ENCODE measurements at regions of chr3 and their contacts with region 1.

Region 1: GRCh38 chr3:195001961-195002861 is 268.7 kb downstream of the XXYLT1 start:
- DNase-seq: peak; percentile 64
- ATAC-seq: peak; percentile 85
- H3K4me3 ChIP-seq: no peak overlapping the region
- H3K4me3 Mint-ChIP-seq: no peak overlapping the region
- H3K27ac ChIP-seq: no peak overlapping the region
- H3K27ac Mint-ChIP-seq: no peak overlapping the region
- H3K4me1 ChIP-seq: peaks cover 15 to 30% of the 10 kb centered on the region in 2 donors
- H3K4me1 Mint-ChIP-seq: peaks cover 31% of the 10 kb centered on the region
- H3K27me3 ChIP-seq: no peaks in the 10 kb centered on the region
- H3K27me3 Mint-ChIP-seq: no peaks in the 10 kb centered on the region
- CTCF ChIP-seq: peak; percentile 66

Region 2: DNA sequence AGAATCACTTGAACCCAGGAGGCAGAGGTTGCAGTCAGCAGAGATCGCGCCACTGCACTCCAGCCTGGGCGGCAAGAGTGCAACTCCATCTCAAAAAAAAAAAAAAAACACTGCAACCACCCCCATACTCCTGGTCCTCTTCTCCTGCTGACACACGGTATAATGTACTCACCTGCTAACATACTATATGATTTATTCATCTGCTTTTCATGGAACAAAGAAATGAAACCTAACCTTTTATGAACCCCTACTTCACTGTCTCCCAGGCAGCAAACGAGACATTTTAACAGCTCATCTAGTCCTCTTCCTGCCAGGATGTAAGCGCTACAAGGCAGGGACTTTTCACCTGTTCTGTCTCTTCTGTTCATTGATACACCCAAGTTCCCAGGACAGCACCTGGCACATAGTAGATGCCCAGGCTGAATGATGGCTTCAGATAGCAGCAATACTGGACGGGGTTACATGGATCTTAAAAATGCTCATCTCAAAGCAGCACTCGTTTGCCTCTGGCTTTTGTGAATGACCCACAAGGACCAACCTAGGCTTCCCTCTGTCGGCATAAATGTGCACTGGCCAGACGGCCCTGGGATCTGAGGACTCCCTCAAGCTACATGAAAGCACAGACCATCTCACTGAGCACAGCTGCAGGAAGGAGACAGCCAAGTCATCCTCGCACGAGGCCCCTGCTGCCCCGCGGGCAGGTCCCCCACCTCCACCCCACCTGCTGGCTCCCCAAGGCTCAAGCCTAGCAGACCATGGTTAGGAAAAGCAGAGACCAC is 248.5 kb after region 1 on chr3:
- CTCF ChIA-PET with region 1: interaction called, 14 read pairs
- POLR2A ChIA-PET with region 1: no interaction called
- intact Hi-C with region 1: no loop called
- DNase-seq: peak; percentile 31
- ATAC-seq: peak; percentile 73
- H3K4me3 ChIP-seq: no peak overlapping the region
- H3K4me3 Mint-ChIP-seq: no peak overlapping the region
- H3K27ac ChIP-seq: no peak overlapping the region
- H3K27ac Mint-ChIP-seq: peak overlapping the region; percentile 0
- H3K4me1 ChIP-seq: peaks cover 8 to 11% of the 10 kb centered on the region in 2 donors
- H3K4me1 Mint-ChIP-seq: peaks cover 19% of the 10 kb centered on the region
- H3K27me3 ChIP-seq: no peaks in the 10 kb centered on the region
- H3K27me3 Mint-ChIP-seq: no peaks in the 10 kb centered on the region
- CTCF ChIP-seq: no peak

Region 3: GRCh38 chr3:195259475-195260279 is 257.5 kb after region 1 on chr3:
- CTCF ChIA-PET with region 1: interaction called, 12 read pairs
- POLR2A ChIA-PET with region 1: interaction called, 3 read pairs
- intact Hi-C with region 1: loop called (anchors 1 kb)
- DNase-seq: peak; percentile 95
- ATAC-seq: peak; percentile 90
- H3K4me3 ChIP-seq: peak overlapping the region in 4 of 5 experiments; percentile 63 to 89 (median 72)
- H3K4me3 Mint-ChIP-seq: peak overlapping the region; percentile 74
- H3K27ac ChIP-seq: peak overlapping the region; percentile 78 to 87
- H3K27ac Mint-ChIP-seq: peak overlapping the region; percentile 92
- H3K4me1 ChIP-seq: peaks cover 16 to 23% of the 10 kb centered on the region in 2 donors
- H3K4me1 Mint-ChIP-seq: peaks cover 19% of the 10 kb centered on the region
- H3K27me3 ChIP-seq: no peaks in the 10 kb centered on the region
- H3K27me3 Mint-ChIP-seq: no peaks in the 10 kb centered on the region
- CTCF ChIP-seq: peak; percentile 73

Region 4: DNA sequence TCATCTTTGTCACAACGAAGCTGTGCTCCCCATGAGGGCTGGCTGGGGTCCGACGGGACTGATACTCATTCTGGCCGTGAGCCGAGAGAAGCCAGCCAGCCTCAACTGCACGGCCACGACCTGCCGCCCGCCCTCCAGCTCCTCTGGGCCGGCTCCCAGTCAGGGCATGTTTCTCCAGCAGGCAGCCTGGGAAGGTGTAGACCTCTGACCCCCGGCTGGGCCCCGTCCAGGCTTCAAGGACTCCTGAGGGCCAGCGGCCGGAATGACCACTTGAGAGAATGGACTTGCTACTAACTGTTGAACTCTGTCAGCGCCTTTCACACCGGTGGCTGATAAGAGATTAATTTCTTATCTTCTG is 827.7 kb after region 1 on chr3:
- CTCF ChIA-PET with region 1: no interaction called
- POLR2A ChIA-PET with region 1: no interaction called
- intact Hi-C with region 1: no loop called
- DNase-seq: no peak
- ATAC-seq: no peak
- H3K4me3 ChIP-seq: no peak overlapping the region
- H3K4me3 Mint-ChIP-seq: no peak overlapping the region
- H3K27ac ChIP-seq: no peak overlapping the region
- H3K27ac Mint-ChIP-seq: no peak overlapping the region
- H3K4me1 ChIP-seq: no peaks in the 10 kb centered on the region
- H3K4me1 Mint-ChIP-seq: no peaks in the 10 kb centered on the region
- H3K27me3 ChIP-seq: no peaks in the 10 kb centered on the region
- H3K27me3 Mint-ChIP-seq: peaks cover 5% of the 10 kb centered on the region
- CTCF ChIP-seq: no peak